CD4-positive, alpha-beta memory T cell (primary cell): ENCODE measurements at regions of chr12 and their contacts with region 1.

Region 1: GRCh38 chr12:92505254-92506231 is 197.2 kb upstream of the PLEKHG7 start:
- DNase-seq: peak; percentile 45 to 60 (median 56)
- H3K4me3 ChIP-seq: peak overlapping the region; percentile 28 to 30
- H3K4me3 Mint-ChIP-seq: peak overlapping the region; percentile 80 to 94 (median 91)
- H3K27ac ChIP-seq: peak overlapping the region; percentile 58
- H3K27ac Mint-ChIP-seq: peak overlapping the region; percentile 75 to 98 (median 94)
- H3K4me1 ChIP-seq: peaks cover 42% of the 10 kb centered on the region
- H3K4me1 Mint-ChIP-seq: peaks cover 24 to 37% (median 32%) of the 10 kb centered on the region in 4 donors
- H3K27me3 ChIP-seq: no peaks in the 10 kb centered on the region
- H3K27me3 Mint-ChIP-seq: no peaks in the 10 kb centered on the region

Region 2: GRCh38 chr12:92363295-92364146 is 142.0 kb before region 1 on chr12:
- CTCF ChIA-PET with region 1: no interaction called
- POLR2A ChIA-PET with region 1: interaction called, 3 read pairs
- intact Hi-C with region 1: loop called (anchors 5 kb)
- DNase-seq: peak; percentile 40 to 76 (median 49)
- H3K4me3 ChIP-seq: peak overlapping the region; percentile 14 to 34
- H3K4me3 Mint-ChIP-seq: peak overlapping the region; percentile 44 to 92 (median 78)
- H3K27ac ChIP-seq: peak overlapping the region; percentile 41
- H3K27ac Mint-ChIP-seq: peak overlapping the region; percentile 85 to 97 (median 94)
- H3K4me1 ChIP-seq: peaks cover 66% of the 10 kb centered on the region
- H3K4me1 Mint-ChIP-seq: peaks cover 42 to 75% (median 60%) of the 10 kb centered on the region in 4 donors
- H3K27me3 ChIP-seq: no peaks in the 10 kb centered on the region
- H3K27me3 Mint-ChIP-seq: no peaks in the 10 kb centered on the region

Region 3: GRCh38 chr12:92492291-92492690 is 13.3 kb before region 1 on chr12:
- CTCF ChIA-PET with region 1: interaction called, 9 read pairs
- POLR2A ChIA-PET with region 1: interaction called, 10 read pairs
- intact Hi-C with region 1: no loop called
- DNase-seq: no peak
- H3K4me3 ChIP-seq: no peak overlapping the region
- H3K4me3 Mint-ChIP-seq: no peak overlapping the region
- H3K27ac ChIP-seq: no peak overlapping the region
- H3K27ac Mint-ChIP-seq: no peak overlapping the region
- H3K4me1 ChIP-seq: no peaks in the 10 kb centered on the region
- H3K4me1 Mint-ChIP-seq: peaks cover 0 to 4% (median 0%) of the 10 kb centered on the region in 4 donors
- H3K27me3 ChIP-seq: no peaks in the 10 kb centered on the region
- H3K27me3 Mint-ChIP-seq: no peaks in the 10 kb centered on the region

Region 4: DNA sequence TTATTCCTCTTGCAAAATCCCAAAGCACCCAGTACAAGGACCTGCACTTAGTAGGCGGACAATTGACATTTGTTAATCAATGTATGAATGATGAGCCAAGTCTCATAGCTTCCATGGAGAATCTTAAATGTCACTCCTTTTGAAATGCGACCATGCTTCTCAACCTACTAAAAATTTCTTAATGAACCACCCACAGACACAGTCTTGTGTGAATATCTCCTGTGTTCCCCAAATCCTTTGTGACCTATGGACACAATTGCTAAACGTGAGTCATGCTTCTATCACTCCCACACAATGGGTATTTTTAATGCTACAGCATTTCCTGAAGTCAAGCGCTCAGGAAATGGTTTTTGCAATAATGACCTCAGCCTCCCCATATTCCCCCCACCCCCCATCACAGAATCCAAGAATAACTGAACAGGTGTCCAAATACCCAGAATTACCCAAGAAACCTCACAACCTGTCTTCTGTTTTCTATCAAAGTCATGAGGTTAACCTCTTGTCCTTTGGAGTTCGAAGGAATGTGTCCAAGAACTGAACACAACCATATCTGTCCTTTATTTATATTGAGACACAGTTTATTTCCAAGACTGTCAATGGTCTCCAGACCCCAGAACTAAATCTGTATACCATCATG is 33.7 kb after region 1 on chr12:
- CTCF ChIA-PET with region 1: interaction called, 4 read pairs
- POLR2A ChIA-PET with region 1: interaction called, 17 read pairs
- intact Hi-C with region 1: no loop called
- DNase-seq: peak in 1 of 5 donors; percentile 11
- H3K4me3 ChIP-seq: no peak overlapping the region
- H3K4me3 Mint-ChIP-seq: peak overlapping the region in 6 of 8 donors; percentile 4 to 87 (median 67)
- H3K27ac ChIP-seq: peak overlapping the region; percentile 27
- H3K27ac Mint-ChIP-seq: peak overlapping the region; percentile 76 to 96 (median 92)
- H3K4me1 ChIP-seq: peaks cover 54% of the 10 kb centered on the region
- H3K4me1 Mint-ChIP-seq: peaks cover 34 to 74% (median 61%) of the 10 kb centered on the region in 4 donors
- H3K27me3 ChIP-seq: no peaks in the 10 kb centered on the region
- H3K27me3 Mint-ChIP-seq: no peaks in the 10 kb centered on the region

Region 5: DNA sequence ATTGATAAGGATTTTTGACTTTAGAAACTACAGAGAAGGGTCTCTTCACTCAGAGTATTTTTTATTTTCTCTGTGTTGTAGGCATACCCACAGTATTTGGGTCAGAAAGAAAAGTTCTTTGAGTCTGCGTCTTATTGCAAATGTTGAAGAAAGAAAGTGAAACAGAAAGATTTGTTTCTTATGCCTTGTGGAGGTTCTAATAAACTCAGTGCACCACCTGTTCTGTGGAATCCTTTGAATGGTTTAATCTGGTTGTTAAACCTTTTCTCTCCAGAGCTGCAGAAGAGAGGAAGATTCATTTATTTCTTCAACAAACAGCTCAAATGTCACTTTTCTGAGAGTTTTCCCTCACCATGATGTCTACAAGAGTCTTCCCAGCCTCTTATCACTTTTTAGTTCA is 50.6 kb after region 1 on chr12:
- CTCF ChIA-PET with region 1: interaction called, 5 read pairs
- POLR2A ChIA-PET with region 1: interaction called, 11 read pairs
- intact Hi-C with region 1: no loop called
- DNase-seq: peak in 4 of 5 donors; percentile 22 to 34 (median 28)
- H3K4me3 ChIP-seq: peak overlapping the region; percentile 24 to 27
- H3K4me3 Mint-ChIP-seq: peak overlapping the region; percentile 31 to 79 (median 60)
- H3K27ac ChIP-seq: peak overlapping the region; percentile 30
- H3K27ac Mint-ChIP-seq: peak overlapping the region; percentile 49 to 96 (median 81)
- H3K4me1 ChIP-seq: peaks cover 50% of the 10 kb centered on the region
- H3K4me1 Mint-ChIP-seq: peaks cover 25 to 53% (median 40%) of the 10 kb centered on the region in 4 donors
- H3K27me3 ChIP-seq: no peaks in the 10 kb centered on the region
- H3K27me3 Mint-ChIP-seq: no peaks in the 10 kb centered on the region

Region 6: GRCh38 chr12:92562063-92562734 is 56.7 kb after region 1 on chr12:
- CTCF ChIA-PET with region 1: interaction called, 16 read pairs
- POLR2A ChIA-PET with region 1: interaction called, 11 read pairs
- intact Hi-C with region 1: no loop called
- DNase-seq: no peak
- H3K4me3 ChIP-seq: no peak overlapping the region
- H3K4me3 Mint-ChIP-seq: peak overlapping the region in 2 of 8 donors; percentile 30 to 39
- H3K27ac ChIP-seq: no peak overlapping the region
- H3K27ac Mint-ChIP-seq: peak overlapping the region in 2 of 7 donors; percentile 2 to 3
- H3K4me1 ChIP-seq: peaks cover 14% of the 10 kb centered on the region
- H3K4me1 Mint-ChIP-seq: peaks cover 8 to 43% (median 19%) of the 10 kb centered on the region in 4 donors
- H3K27me3 ChIP-seq: no peaks in the 10 kb centered on the region
- H3K27me3 Mint-ChIP-seq: no peaks in the 10 kb centered on the region